ENCODE measurements at regions of chr2 and their contacts with region 1.

Region 1: GRCh38 chr2:100242891-100243619 is 79.2 kb downstream of the LONRF2 start:
- DNase-seq: peak; percentile 69 to 84 (median 73)
- ATAC-seq: peak; percentile 73 to 88 (median 85)
- H3K4me3 ChIP-seq: no peak overlapping the region
- H3K27ac ChIP-seq: peak overlapping the region in 1 of 12 donors; percentile 78
- H3K4me1 ChIP-seq: peaks cover 0 to 13% (median 3%) of the 10 kb centered on the region in 12 donors
- H3K27me3 ChIP-seq: no peaks in the 10 kb centered on the region
- CTCF ChIP-seq: peak; percentile 47 to 85 (median 78)
- POLR2A ChIP-seq: no peak

Region 2: GRCh38 chr2:99495115-99495860 is 747.8 kb before region 1 on chr2:
- intact Hi-C with region 1: loop called in 1 of 10 experiments (anchors 5 kb)
- DNase-seq: no peak
- ATAC-seq: no peak
- H3K4me3 ChIP-seq: no peak overlapping the region
- H3K27ac ChIP-seq: no peak overlapping the region
- H3K4me1 ChIP-seq: peaks cover 0 to 9% (median 5%) of the 10 kb centered on the region in 12 donors
- H3K27me3 ChIP-seq: peaks cover 0 to 1% (median 0%) of the 10 kb centered on the region in 9 donors
- CTCF ChIP-seq: no peak
- POLR2A ChIP-seq: no peak

Region 3: DNA sequence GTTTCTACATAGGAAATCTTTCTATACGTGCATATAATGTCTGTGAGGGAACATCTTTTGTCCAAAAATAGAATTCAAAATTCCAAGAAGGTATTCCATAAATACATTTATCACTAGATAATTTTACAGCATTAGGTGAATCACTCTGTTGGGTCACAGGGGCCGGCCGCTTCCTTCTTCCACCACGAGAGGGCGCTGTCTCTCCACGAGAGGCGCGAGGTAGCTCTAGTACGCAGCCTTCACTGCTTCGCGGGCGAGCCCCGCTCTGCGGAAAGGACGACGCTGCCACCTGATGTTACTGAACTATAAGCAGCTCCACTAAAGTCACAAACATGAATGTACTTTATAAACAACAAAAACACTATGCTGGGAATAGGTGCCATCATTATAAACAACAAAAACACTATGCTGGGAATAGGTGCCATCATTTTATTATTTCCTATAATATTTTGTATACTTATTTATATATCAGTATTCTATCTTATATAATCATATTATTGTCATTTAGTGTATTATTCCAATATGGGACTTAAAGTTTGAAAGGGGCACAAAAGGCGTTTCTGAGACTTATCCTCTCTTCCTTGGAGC is 683.9 kb before region 1 on chr2:
- intact Hi-C with region 1: loop called (anchors 1 to 5 kb)
- DNase-seq: peak; percentile 79 to 92 (median 87)
- ATAC-seq: peak; percentile 93 to 97 (median 96)
- H3K4me3 ChIP-seq: no peak overlapping the region
- H3K27ac ChIP-seq: no peak overlapping the region
- H3K4me1 ChIP-seq: peaks cover 0 to 5% (median 0%) of the 10 kb centered on the region in 12 donors
- H3K27me3 ChIP-seq: no peaks in the 10 kb centered on the region
- CTCF ChIP-seq: peak; percentile 98 to 100 (median 99)
- POLR2A ChIP-seq: no peak

Region 4: GRCh38 chr2:99725820-99726219 is 517.2 kb before region 1 on chr2:
- intact Hi-C with region 1: loop called in 8 of 10 experiments (anchors 2 to 10 kb)
- DNase-seq: no peak
- ATAC-seq: no peak
- H3K4me3 ChIP-seq: no peak overlapping the region
- H3K27ac ChIP-seq: no peak overlapping the region
- H3K4me1 ChIP-seq: peaks cover 3 to 37% (median 28%) of the 10 kb centered on the region in 12 donors
- H3K27me3 ChIP-seq: no peaks in the 10 kb centered on the region
- CTCF ChIP-seq: peak in 9 of 12 donors; percentile 20 to 58 (median 38)
- POLR2A ChIP-seq: no peak

Region 5: GRCh38 chr2:99818842-99819241 is 424.2 kb before region 1 on chr2:
- intact Hi-C with region 1: loop called in 8 of 10 experiments (anchors 2 to 10 kb)
- DNase-seq: no peak
- ATAC-seq: no peak
- H3K4me3 ChIP-seq: no peak overlapping the region
- H3K27ac ChIP-seq: no peak overlapping the region
- H3K4me1 ChIP-seq: no peaks in the 10 kb centered on the region
- H3K27me3 ChIP-seq: no peaks in the 10 kb centered on the region
- CTCF ChIP-seq: peak in 6 of 12 donors; percentile 14 to 34 (median 24)
- POLR2A ChIP-seq: no peak

Region 6: GRCh38 chr2:100113990-100114433 is 129.0 kb before region 1 on chr2:
- intact Hi-C with region 1: loop called in 2 of 10 experiments (anchors 10 kb)
- DNase-seq: no peak
- ATAC-seq: no peak
- H3K4me3 ChIP-seq: no peak overlapping the region
- H3K27ac ChIP-seq: no peak overlapping the region
- H3K4me1 ChIP-seq: no peaks in the 10 kb centered on the region
- H3K27me3 ChIP-seq: no peaks in the 10 kb centered on the region
- CTCF ChIP-seq: no peak
- POLR2A ChIP-seq: no peak

Region 7: DNA sequence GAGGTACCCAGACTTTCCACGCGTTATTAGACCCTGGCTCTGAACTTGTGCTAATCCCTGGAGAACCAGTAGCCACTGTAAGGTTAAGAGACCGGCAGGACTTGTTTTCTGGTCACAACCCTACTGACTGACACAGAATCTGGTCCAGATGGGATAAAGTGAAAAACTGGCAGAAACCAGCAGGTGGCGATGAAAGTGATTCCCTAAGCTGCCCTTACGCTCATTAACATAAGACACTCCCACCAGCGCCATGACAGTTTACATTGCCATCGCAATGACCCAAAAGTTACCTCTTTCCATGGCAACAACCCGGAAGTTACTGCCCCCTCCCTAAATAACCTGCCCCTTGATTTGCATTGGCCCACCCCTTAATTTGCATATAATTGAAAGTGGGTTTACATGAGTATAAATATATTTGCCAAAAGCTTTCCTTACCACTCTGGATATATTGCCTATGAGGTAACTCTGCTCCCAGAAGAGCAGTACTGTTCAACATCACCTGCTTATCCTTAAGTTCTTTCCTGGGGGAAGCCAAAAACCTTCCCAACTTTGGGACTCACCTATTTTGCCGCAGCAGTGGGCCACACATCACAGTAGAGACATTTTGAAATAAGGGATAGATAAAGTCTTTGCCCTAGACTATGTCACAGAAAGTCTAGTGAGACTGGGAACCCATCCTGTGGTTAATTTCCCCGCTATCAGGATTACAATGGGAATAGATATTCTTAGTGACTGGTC is 64.8 kb before region 1 on chr2:
- intact Hi-C with region 1: loop called in 5 of 10 experiments (anchors 2 to 10 kb)
- DNase-seq: no peak
- ATAC-seq: peak in 2 of 4 donors; percentile 26 to 38
- H3K4me3 ChIP-seq: no peak overlapping the region
- H3K27ac ChIP-seq: no peak overlapping the region
- H3K4me1 ChIP-seq: peaks cover 0 to 11% (median 0%) of the 10 kb centered on the region in 12 donors
- H3K27me3 ChIP-seq: no peaks in the 10 kb centered on the region
- CTCF ChIP-seq: peak in 11 of 12 donors; percentile 9 to 51 (median 35)
- POLR2A ChIP-seq: no peak

Region 8: DNA sequence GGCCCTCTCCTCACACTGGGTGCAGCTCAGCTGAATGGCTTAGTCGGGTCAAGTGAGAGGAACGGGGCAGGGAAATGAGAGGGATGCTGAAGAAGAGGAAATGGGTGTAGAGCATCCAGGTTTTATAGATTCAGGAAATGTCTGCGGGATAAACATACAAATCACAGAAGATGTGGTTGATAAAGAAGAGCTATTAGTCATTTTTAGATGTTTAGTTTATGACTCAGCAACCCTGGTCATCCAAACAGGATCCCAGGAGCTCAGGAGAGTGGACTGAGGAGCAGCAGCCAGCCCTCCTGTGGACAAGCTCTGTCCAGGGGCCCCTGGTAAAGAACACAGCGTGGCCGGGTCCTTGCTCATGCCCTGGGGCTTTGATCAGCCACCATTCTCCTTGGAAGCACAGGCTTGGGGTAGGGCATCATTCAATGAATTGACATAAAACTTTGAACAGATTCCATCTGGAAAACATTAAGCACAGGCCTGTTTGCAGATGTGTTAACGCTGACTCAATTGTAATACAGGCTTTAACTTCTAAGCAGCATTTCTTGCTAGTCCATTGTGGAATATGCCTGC is 659.9 kb after region 1 on chr2:
- intact Hi-C with region 1: no loop called
- DNase-seq: peak in 1 of 5 donors; percentile 45
- ATAC-seq: peak in 3 of 4 donors; percentile 29 to 59 (median 31)
- H3K4me3 ChIP-seq: no peak overlapping the region
- H3K27ac ChIP-seq: peak overlapping the region in 7 of 12 donors; percentile 9 to 46 (median 34)
- H3K4me1 ChIP-seq: peaks cover 0 to 62% (median 22%) of the 10 kb centered on the region in 12 donors
- H3K27me3 ChIP-seq: no peaks in the 10 kb centered on the region
- CTCF ChIP-seq: no peak
- POLR2A ChIP-seq: no peak